ENCODE measurements at regions of chr11 and their contacts with region 1.

Region 1: GRCh38 chr11:34357701-34358257 is at the start of gene ABTB2:
- DNase-seq: peak; percentile 97
- CTCF ChIP-seq: no peak

Region 2: GRCh38 chr11:33829433-33830141 is 528.2 kb before region 1 on chr11:
- in situ Hi-C with region 1: loop called (anchors 25 kb)
- DNase-seq: peak; percentile 88
- CTCF ChIP-seq: peak; percentile 85

Region 3: GRCh38 chr11:34161812-34162499 is 195.8 kb before region 1 on chr11:
- in situ Hi-C with region 1: no loop called
- DNase-seq: peak; percentile 68
- CTCF ChIP-seq: no peak

Region 4: GRCh38 chr11:34174412-34175041 is 183.3 kb before region 1 on chr11:
- in situ Hi-C with region 1: loop called (anchors 10 kb)
- DNase-seq: peak; percentile 92
- CTCF ChIP-seq: peak; percentile 99

Region 5: DNA sequence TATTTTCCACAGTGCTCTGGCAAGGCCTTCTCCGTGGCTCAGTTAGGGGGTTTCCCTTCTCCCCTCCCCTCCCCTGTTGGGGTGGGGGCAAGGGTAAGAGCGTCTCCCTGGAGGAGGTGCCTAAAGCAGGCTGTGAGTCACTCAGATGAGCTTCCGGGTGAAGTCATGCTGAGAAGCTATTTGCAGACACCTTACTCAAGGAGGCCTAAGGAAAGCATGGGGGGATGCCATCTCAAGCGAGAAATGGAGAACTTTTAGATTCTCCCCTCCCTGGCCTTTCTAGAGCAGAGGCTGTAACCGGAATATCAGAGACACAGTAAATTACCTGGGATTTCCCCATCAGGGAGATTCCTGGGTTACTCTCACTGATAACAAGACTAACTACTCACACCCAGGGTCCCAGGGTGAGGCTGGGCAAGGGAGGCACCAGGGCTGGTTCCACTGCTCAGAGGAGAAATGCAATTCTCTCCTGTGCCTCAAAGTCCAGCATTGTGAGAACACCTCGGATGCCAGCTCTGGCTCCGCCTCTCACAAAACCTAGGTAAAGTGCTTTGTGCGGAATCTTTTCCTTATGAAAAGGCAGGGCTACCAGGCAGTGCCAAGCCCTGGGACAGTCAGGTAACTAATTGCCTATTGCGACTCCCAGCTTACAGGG is 123.6 kb before region 1 on chr11:
- in situ Hi-C with region 1: loop called (anchors 10 kb)
- DNase-seq: peak; percentile 47
- CTCF ChIP-seq: no peak